ENCODE measurements at regions of chr2 and their contacts with region 1.

Region 1: GRCh38 chr2:144332356-144333142 is 187.4 kb downstream of the ZEB2 start:
- DNase-seq: peak; percentile 87
- ATAC-seq: peak; percentile 90
- H3K4me3 Mint-ChIP-seq: peak overlapping the region; percentile 83
- H3K27ac Mint-ChIP-seq: peak overlapping the region; percentile 95
- H3K4me1 Mint-ChIP-seq: peaks cover 38% of the 10 kb centered on the region
- H3K27me3 Mint-ChIP-seq: no peaks in the 10 kb centered on the region

Region 2: GRCh38 chr2:144288438-144288837 is 44.1 kb before region 1 on chr2:
- CTCF ChIA-PET with region 1: no interaction called
- POLR2A ChIA-PET with region 1: no interaction called
- DNase-seq: no peak
- ATAC-seq: no peak
- H3K4me3 Mint-ChIP-seq: no peak overlapping the region
- H3K27ac Mint-ChIP-seq: no peak overlapping the region
- H3K4me1 Mint-ChIP-seq: no peaks in the 10 kb centered on the region
- H3K27me3 Mint-ChIP-seq: no peaks in the 10 kb centered on the region

Region 3: GRCh38 chr2:144320491-144320890 is 12.1 kb before region 1 on chr2:
- CTCF ChIA-PET with region 1: interaction called, 5 read pairs
- POLR2A ChIA-PET with region 1: interaction called, 12 read pairs
- DNase-seq: peak; percentile 73
- ATAC-seq: peak; percentile 70
- H3K4me3 Mint-ChIP-seq: peak overlapping the region; percentile 54
- H3K27ac Mint-ChIP-seq: peak overlapping the region; percentile 83
- H3K4me1 Mint-ChIP-seq: peaks cover 58% of the 10 kb centered on the region
- H3K27me3 Mint-ChIP-seq: no peaks in the 10 kb centered on the region